IMR-90 (cell line): ENCODE measurements at regions of chr6 and their contacts with region 1.

Region 1: DNA sequence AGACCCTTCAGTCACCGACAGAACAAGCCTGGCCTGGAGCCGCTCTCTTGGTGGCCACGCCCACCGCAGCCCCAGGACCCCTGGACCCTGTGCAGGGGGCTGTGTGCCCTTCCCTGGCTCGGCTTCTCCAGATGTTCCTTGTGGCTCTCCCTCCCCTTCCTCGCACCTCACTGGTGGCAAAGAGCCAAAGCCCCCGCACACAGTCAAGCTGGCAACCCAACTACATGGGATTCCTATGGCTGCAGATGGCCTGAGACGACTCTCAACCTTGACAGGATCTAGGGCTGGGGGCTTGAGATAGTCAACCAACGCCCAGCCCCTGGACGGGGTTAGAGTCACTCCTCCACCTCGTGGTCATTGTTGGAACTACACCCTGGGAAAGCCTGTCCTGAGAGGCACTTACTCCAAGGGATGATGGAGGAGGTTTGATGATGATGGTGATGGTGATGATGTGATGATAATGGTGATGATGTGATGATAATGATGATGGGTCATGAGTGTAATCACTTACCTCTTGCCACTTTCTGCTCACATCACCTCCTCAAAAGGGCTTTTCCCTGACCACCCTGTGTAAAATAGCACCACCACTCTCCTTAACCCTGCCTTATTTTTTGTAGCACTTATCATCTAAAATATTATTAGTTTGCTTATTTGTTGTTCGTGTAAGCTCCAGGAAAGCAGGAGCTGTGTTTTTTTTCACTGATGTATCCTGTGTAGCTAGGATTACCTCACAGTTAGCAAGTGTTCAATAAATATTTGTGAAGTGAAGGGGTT is 278.4 kb downstream of the LRFN2 start:
- DNase-seq: peak; percentile 26
- ATAC-seq: peak; percentile 94
- H3K4me3 ChIP-seq: no peak overlapping the region
- H3K27ac ChIP-seq: no peak overlapping the region
- H3K4me1 ChIP-seq: no peaks in the 10 kb centered on the region
- H3K27me3 ChIP-seq: peaks cover 4% of the 10 kb centered on the region; the same call in 1 of the 2 replicates
- CTCF ChIP-seq: peak; percentile 67
- POLR2A ChIP-seq: no peak
- RAD21 ChIP-seq: peak; percentile 61

Region 2: DNA sequence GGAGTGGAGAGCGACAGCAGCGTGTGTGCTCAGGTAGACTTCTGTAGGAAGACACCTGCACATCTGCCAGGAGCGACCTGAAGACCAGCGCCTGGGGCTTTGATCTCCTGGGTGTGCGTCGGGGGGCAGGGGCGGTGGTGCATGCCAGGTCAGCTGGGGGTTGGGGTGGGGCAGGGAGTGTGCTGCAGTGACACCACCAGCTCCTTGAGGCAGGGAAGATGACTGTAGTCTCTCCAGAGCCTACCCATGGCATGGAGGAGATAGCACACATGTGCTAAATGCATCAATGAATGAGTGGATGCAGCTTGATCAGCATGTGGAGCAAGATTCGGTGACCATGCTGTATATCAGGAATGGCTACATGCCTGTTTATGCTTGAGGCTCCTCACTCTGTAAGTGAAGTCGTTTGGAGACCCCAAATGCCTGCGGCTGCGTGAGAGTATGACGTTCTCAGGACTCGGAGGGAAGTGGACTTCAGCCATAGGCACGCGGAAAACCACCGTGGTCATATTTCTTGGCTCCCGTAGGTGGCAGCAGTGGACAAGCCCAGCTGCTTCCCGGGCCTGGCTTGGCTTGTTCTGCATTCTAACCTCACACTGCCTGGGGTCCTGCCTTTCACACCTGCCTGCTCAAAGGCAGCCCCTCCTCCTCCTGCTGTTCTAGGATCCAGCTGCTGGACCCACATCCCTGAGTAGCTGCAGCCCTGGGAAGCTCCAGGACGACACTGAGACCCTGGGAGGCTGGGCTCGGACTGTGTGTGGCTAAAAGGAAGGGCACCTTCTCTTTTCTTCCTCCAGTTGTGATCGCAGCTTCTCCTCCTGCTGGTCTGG is 946.8 kb before region 1 on chr6:
- CTCF ChIA-PET with region 1: no interaction called
- POLR2A ChIA-PET with region 1: no interaction called
- dilution Hi-C with region 1: no loop called
- in situ Hi-C with region 1: no loop called
- intact Hi-C with region 1: loop called (anchors 2 kb)
- DNase-seq: peak; percentile 58
- ATAC-seq: peak; percentile 98
- H3K4me3 ChIP-seq: no peak overlapping the region
- H3K27ac ChIP-seq: no peak overlapping the region
- H3K4me1 ChIP-seq: no peaks in the 10 kb centered on the region; the same call in 1 of the 2 replicates
- H3K27me3 ChIP-seq: no peaks in the 10 kb centered on the region
- CTCF ChIP-seq: peak; percentile 75
- POLR2A ChIP-seq: no peak
- RAD21 ChIP-seq: peak; percentile 87

Region 3: GRCh38 chr6:39791850-39792539 is 516.7 kb before region 1 on chr6 and contains the start of gene DAAM2:
- CTCF ChIA-PET with region 1: no interaction called
- POLR2A ChIA-PET with region 1: no interaction called
- dilution Hi-C with region 1: no loop called
- in situ Hi-C with region 1: no loop called
- intact Hi-C with region 1: loop called (anchors 5 kb)
- DNase-seq: peak; percentile 41
- ATAC-seq: peak; percentile 88
- H3K4me3 ChIP-seq: peak within 1 kb of the TSS; percentile 49
- H3K27ac ChIP-seq: peak within 1 kb of the TSS; percentile 35
- H3K4me1 ChIP-seq: peaks cover 14% of the 10 kb centered on the region
- H3K27me3 ChIP-seq: no peaks in the 10 kb centered on the region
- CTCF ChIP-seq: peak; percentile 27; the same call in 1 of the 2 replicates
- POLR2A ChIP-seq: no peak
- RAD21 ChIP-seq: no peak
- total RNA-seq, gene DAAM2: 12.9 and 13.1 TPM in 2 replicates

Region 4: GRCh38 chr6:39902786-39903465 is 405.8 kb before region 1 on chr6:
- CTCF ChIA-PET with region 1: no interaction called
- POLR2A ChIA-PET with region 1: no interaction called
- dilution Hi-C with region 1: no loop called
- in situ Hi-C with region 1: no loop called
- intact Hi-C with region 1: loop called (anchors 10 kb)
- DNase-seq: no peak
- ATAC-seq: no peak
- H3K4me3 ChIP-seq: no peak overlapping the region
- H3K27ac ChIP-seq: no peak overlapping the region
- H3K4me1 ChIP-seq: no peaks in the 10 kb centered on the region
- H3K27me3 ChIP-seq: no peaks in the 10 kb centered on the region
- CTCF ChIP-seq: no peak
- POLR2A ChIP-seq: no peak
- RAD21 ChIP-seq: no peak

Region 5: DNA sequence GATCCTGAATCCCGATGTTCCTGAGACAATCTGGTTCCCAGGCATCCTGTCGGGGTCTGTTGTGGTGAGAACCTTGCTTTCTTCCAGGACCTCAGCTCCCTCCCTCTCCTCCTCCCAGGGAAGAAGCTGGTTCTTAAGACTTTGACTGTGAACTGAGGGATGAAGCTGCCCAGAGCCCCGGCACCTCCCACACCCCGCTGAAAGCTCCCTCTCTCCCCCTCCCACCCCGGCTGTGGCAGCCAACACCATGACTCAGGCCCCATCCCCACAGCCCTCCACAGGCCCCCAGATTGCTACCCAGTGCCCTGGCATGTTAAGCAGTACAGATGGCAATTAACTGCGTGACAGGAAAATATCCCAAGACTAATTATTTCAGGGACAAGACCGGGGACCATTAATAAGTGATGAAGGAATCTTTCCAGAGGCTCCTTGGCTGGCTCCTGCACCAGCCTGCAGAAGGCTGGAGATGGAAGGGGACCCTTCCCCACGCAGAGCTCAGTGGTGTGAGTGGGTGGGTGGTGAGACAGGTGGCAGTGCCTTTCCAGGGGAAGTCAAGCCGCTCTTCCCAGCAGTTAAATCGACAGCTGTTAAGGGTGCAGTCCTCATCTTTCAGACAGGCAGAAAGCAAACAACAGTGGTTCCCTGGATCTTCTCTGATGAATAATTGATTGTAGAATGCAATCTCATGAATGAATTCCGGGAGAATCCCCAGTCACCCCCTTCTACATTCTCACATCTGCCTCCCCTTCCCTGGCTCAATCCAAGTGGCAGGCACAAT is 40.6 kb after region 1 on chr6:
- CTCF ChIA-PET with region 1: no interaction called
- POLR2A ChIA-PET with region 1: no interaction called
- dilution Hi-C with region 1: no loop called
- in situ Hi-C with region 1: no loop called
- intact Hi-C with region 1: no loop called
- DNase-seq: no peak
- ATAC-seq: no peak
- H3K4me3 ChIP-seq: no peak overlapping the region
- H3K27ac ChIP-seq: no peak overlapping the region
- H3K4me1 ChIP-seq: no peaks in the 10 kb centered on the region
- H3K27me3 ChIP-seq: no peaks in the 10 kb centered on the region
- CTCF ChIP-seq: no peak
- POLR2A ChIP-seq: no peak
- RAD21 ChIP-seq: no peak